ENCODE measurements at regions of chr7 and their contacts with region 1.

Region 1: GRCh38 chr7:16062269-16062668 is 359.1 kb downstream of the CRPPA start:
- DNase-seq: no peak
- ATAC-seq: peak; percentile 70

Region 2: DNA sequence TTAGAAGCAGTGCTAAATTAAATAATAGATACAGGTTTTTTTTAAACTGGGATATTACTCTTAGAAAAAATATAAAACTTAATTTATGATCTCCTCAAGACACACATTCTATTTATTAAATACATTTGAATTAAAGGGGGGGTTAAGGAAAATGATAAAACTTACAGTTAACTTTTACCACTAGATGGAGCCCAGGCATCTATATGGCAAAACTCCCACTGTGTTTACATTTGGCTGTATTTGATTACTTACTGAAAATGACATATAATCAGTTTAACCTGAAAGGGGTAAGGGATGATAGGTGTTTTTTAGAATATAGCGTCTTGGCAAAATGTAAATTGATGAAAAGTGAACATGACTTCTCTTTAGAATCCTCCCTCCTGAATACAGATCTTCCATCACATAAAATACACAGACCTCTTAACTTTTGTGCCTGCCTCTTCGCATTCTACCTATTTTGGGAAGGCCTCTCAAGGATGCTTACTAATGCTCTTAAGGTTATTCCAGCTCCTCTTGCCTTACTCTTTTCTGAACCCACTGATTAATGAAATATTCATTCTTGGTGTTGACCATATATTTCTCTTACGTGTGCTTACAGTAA is 736.1 kb before region 1 on chr7:
- intact Hi-C with region 1: loop called (anchors 10 kb)
- DNase-seq: no peak
- ATAC-seq: no peak

Region 3: GRCh38 chr7:15686295-15686956 is 375.8 kb before region 1 on chr7 and contains the start of gene MEOX2:
- intact Hi-C with region 1: loop called (anchors 10 kb)
- DNase-seq: peak; percentile 89
- ATAC-seq: peak; percentile 90
- total RNA-seq, gene MEOX2: 11.2 TPM